ENCODE measurements at regions of chr6 and their contacts with region 1.

Region 1: DNA sequence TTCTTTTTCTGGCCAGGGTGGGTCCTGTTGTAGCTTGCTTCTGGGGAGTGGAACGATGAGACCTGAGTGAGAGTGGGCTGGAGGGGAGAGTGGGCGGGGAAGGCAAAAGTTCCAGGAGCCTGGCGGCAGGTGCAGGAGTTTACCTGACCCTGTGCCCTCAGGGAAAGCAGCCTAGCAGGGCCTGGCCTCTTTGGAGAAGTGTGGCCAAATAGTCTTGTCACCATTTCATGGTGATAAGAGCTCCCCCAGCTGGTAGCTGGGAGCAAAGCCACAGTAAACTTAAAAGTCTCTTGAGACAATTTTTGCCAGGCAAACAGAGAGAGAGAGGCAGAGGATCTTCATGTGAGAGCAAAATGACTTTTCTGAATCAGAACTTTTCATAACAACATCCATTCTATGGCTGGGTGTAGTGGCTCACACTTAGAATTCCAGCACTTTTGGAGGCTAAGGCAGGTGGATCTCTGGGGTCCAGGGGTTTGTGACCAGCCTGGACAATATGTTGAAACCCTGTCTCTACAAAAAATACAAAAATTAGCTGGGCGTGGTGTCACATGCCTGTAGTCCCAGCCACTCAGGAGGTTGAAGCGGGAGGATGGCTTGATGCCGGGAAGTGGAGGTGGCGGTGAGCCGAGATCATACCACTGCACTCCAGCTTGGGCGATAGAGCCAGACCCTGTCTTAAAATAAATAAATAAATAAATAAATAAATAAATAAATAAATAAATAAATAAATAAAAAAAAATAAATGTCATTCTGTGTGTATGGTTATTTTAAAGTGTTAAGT is 161.8 kb upstream of the SCGN start:
- DNase-seq: peak; percentile 63
- ATAC-seq: peak; percentile 89

Region 2: GRCh38 chr6:25278914-25279747 is 211.1 kb before region 1 on chr6 and contains the start of gene CARMIL1:
- intact Hi-C with region 1: loop called (anchors 5 kb)
- DNase-seq: peak; percentile 87
- ATAC-seq: peak; percentile 96
- total RNA-seq, gene CARMIL1: 3.4 TPM

Measured in Right ventricle myocardium superior (tissue), 1 donor.